ENCODE measurements at regions of chr20 and their contacts with region 1.

Region 1: GRCh38 chr20:50379049-50379990 is 130.9 kb upstream of the PTPN1 start:
- DNase-seq: peak; percentile 97 to 99
- ATAC-seq: peak; percentile 89
- H3K4me3 ChIP-seq: peak overlapping the region; percentile 26 to 50 (median 40)
- H3K27ac ChIP-seq: peak overlapping the region; percentile 89 to 93 (median 92)
- H3K4me1 ChIP-seq: peaks cover 30 to 42% of the 10 kb centered on the region in 2 donors
- H3K27me3 ChIP-seq: no peaks in the 10 kb centered on the region
- CTCF ChIP-seq: no peak
- POLR2A ChIP-seq: peak; percentile 96 to 98

Region 2: DNA sequence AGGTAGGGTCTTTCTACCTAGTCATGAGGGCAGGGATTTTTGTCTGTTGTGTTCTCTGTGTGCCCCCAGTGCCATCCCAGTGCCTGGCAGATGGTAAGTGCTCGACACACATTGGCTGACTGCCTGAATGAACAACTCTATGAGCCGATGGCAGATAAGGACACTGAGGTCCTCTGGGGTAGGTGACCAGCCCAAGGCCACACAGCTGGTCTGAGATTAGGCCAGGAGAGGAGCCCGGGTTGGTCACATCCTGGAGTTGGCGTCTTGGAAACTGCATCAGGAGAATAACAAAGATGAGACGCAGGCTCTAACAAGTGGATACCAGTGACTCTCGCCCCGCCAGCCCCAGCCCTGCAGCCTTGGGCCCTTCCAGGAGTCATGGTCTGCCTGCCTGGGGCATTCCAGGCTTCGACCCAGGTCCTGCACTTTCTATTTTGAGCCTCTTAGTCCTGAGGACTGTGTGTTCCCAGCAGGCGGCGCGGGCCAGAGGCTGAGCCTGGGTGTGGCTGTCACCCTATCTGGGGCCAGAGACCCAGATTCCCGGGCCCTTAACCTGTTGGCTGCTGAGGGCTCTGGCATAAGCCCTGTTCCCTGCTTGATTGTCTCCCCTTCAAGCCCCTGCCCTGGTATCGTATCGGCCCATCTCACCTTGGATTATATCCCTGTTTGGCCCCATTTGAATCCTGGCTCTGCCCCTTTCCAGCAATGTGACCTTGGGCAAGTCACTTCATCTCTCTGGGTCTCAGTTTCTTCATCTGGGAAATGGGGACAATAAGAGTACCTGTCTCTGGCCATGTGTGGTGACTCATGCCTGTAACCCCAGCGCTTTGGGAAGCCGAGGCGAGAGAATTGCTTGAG is 100.4 kb before region 1 on chr20:
- in situ Hi-C with region 1: loop called in 1 of 4 experiments (anchors 25 kb)
- intact Hi-C with region 1: loop called (anchors 1 kb)
- DNase-seq: peak; percentile 91 to 98
- ATAC-seq: peak; percentile 79 to 85
- H3K4me3 ChIP-seq: no peak overlapping the region
- H3K27ac ChIP-seq: peak overlapping the region; percentile 87 to 96 (median 92)
- H3K4me1 ChIP-seq: peaks cover 43 to 50% of the 10 kb centered on the region in 2 donors
- H3K27me3 ChIP-seq: no peaks in the 10 kb centered on the region
- CTCF ChIP-seq: peak; percentile 46 to 54 (median 49)
- POLR2A ChIP-seq: peak; percentile 52 to 63

Region 3: DNA sequence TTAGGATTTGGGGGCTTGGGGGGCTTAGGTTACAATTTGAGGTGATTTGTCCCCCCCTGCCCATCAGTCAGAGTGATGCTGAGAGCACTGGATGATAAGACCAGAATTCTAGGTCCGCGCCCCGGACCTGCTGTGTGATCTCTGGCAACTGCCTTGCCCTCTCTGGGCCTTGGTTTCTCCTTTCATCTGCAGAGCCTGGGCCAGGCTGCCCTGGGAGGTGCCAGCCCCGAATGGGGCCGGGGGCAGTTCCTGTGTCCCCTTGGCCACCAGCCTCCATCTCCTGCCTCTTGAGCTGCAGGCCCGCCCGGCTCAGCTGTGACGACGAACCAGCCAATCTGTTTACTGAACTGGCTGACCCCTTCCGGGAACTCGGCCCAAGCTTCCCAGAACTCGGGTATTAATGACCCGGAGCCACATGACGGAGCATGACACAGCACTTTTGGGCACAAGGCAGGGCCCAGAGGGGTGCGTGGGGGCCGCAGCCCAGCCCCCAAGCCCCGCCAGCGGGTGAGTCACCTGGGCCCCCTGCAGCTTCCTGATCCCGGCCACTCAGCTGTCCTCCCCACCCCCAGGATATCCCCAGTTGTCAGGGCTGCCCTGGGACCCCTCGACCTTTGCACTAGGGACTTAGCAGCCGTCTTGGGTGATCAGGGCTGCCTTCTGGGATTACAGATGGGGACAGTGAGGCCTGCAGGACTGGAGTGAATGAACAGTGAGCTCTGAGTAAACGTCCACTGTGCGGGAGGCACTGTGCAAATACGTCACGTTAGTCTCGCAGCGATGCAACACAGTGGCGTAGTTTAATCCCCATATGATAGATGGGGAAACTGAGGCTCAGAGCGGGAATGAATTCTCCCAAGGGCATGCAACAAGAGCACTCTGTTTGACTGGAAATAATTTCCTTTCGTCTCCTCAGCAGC is 86.7 kb before region 1 on chr20:
- in situ Hi-C with region 1: loop called in 1 of 4 experiments (anchors 25 kb)
- intact Hi-C with region 1: loop called (anchors 5 kb)
- DNase-seq: peak; percentile 89 to 92
- ATAC-seq: peak; percentile 76 to 84
- H3K4me3 ChIP-seq: no peak overlapping the region
- H3K27ac ChIP-seq: peak overlapping the region; percentile 83 to 95 (median 85)
- H3K4me1 ChIP-seq: peaks cover 19 to 21% of the 10 kb centered on the region in 2 donors
- H3K27me3 ChIP-seq: no peaks in the 10 kb centered on the region
- CTCF ChIP-seq: no peak
- POLR2A ChIP-seq: peak; percentile 32

Region 4: GRCh38 chr20:50308513-50309279 is 70.6 kb before region 1 on chr20:
- in situ Hi-C with region 1: no loop called
- intact Hi-C with region 1: loop called (anchors 1 kb)
- DNase-seq: peak; percentile 79 to 87
- ATAC-seq: peak; percentile 19 to 27
- H3K4me3 ChIP-seq: no peak overlapping the region
- H3K27ac ChIP-seq: peak overlapping the region; percentile 87 to 95 (median 90)
- H3K4me1 ChIP-seq: peaks cover 49 to 53% of the 10 kb centered on the region in 2 donors
- H3K27me3 ChIP-seq: no peaks in the 10 kb centered on the region
- CTCF ChIP-seq: no peak
- POLR2A ChIP-seq: peak; percentile 53 to 67

Measured in gastrocnemius medialis (tissue), 4 donors.